ENCODE measurements at regions of chr12 and their contacts with region 1.

Region 1: DNA sequence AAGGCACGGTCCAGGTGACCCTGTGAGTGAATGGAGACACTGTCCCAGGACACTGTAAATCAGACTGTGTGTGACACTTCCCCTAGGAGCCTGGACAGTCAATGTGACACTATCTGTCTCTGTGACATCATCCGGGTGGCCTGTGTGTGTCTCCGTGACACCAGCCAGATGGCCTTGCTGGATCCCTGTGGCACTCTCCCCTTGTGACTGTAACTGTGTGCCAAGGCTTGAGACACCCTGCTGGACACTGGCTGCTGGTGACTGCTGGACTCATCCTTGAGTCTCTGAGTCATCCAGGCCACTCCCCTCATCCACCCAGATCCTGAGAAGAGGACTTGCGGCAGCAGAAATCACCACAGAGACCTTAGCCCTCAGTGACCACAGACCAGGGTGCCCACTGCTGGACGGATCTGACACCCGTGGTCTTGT is 51.6 kb downstream of the MVK start:
- DNase-seq: no peak
- ATAC-seq: peak; percentile 24; the same call in 1 of the 2 replicates
- H3K4me3 ChIP-seq: no peak overlapping the region
- H3K27ac ChIP-seq: no peak overlapping the region
- H3K4me1 ChIP-seq: no peaks in the 10 kb centered on the region
- H3K27me3 ChIP-seq: peaks cover 12% of the 10 kb centered on the region
- CTCF ChIP-seq: no peak

Region 2: DNA sequence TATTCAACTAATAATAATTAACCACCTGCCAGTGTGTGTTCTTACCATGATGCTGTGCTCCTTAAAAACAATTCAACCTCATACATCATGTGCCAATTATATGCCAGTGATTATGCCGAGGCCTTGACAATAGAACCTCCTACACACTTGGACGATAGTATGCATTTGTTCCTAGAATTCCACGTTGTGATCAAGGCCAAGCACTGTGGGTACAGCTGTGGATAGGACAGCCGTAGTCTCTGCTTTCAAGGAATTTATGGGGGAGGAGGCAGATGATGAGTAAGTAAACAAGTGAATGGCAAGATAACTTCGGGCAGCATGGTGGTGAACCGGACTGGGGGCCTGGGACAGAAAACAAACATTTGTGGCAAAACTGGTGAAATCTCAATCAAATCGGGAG is 295.5 kb before region 1 on chr12:
- CTCF ChIA-PET with region 1: no interaction called
- POLR2A ChIA-PET with region 1: no interaction called
- in situ Hi-C with region 1: no loop called
- intact Hi-C with region 1: no loop called
- DNase-seq: no peak
- ATAC-seq: no peak
- H3K4me3 ChIP-seq: no peak overlapping the region
- H3K27ac ChIP-seq: no peak overlapping the region
- H3K4me1 ChIP-seq: no peaks in the 10 kb centered on the region
- H3K27me3 ChIP-seq: no peaks in the 10 kb centered on the region; the same call in 1 of the 2 replicates
- CTCF ChIP-seq: no peak

Region 3: DNA sequence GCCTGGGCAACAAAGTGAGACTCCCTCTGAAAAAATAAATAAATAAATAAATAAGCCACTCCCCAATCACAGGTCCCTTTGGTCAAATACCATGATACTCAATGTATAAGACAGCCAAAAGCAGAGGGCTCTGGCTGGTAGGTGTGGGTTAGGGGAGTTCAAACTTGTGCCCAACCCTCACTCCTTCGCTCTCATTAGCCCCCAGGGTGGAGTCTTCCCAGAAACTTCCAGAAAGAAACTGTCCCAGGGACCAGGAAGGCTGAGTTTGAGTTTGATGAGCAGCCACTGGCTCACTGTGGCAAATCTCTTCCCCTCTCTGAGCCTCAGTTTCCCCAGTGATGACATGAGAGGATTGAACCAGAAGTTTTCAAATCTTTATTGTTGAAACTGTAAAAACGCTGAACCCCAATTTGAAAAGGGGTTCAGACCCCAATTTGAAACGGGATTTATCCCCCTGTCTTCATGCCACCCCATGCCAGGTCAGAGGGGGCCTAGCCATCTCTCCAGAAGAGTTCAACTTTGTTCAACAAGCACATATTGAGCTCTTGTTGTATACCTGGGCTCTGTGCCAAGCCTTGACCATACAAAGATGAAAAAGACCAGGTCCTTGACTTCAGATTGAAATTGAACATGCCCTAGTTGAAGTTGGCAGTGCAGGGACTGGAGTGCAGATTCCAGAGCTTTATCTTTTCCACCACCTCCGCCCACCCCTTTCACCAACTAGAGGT is 79.4 kb after region 1 on chr12:
- CTCF ChIA-PET with region 1: no interaction called
- POLR2A ChIA-PET with region 1: interaction called, 10 read pairs
- in situ Hi-C with region 1: no loop called
- intact Hi-C with region 1: no loop called
- DNase-seq: no peak
- ATAC-seq: no peak
- H3K4me3 ChIP-seq: no peak overlapping the region
- H3K27ac ChIP-seq: no peak overlapping the region
- H3K4me1 ChIP-seq: peaks cover 13% of the 10 kb centered on the region
- H3K27me3 ChIP-seq: no peaks in the 10 kb centered on the region
- CTCF ChIP-seq: no peak

Region 4: GRCh38 chr12:109713187-109713984 is 88.2 kb after region 1 on chr12 and contains the start of gene FAM222A:
- CTCF ChIA-PET with region 1: no interaction called
- POLR2A ChIA-PET with region 1: no interaction called
- in situ Hi-C with region 1: no loop called
- intact Hi-C with region 1: loop called (anchors 10 kb)
- DNase-seq: peak; percentile 58
- ATAC-seq: peak; percentile 89
- H3K4me3 ChIP-seq: peak within 1 kb of the TSS; percentile 52 to 56
- H3K27ac ChIP-seq: no peak within 1 kb of the TSS
- H3K4me1 ChIP-seq: peaks cover 36% of the 10 kb centered on the region
- H3K27me3 ChIP-seq: no peaks in the 10 kb centered on the region
- CTCF ChIP-seq: no peak
- total RNA-seq, gene FAM222A: 12.8 TPM

Measured in Panc1 (cell line).